ENCODE measurements at regions of chr4 and their contacts with region 1.

Region 1: DNA sequence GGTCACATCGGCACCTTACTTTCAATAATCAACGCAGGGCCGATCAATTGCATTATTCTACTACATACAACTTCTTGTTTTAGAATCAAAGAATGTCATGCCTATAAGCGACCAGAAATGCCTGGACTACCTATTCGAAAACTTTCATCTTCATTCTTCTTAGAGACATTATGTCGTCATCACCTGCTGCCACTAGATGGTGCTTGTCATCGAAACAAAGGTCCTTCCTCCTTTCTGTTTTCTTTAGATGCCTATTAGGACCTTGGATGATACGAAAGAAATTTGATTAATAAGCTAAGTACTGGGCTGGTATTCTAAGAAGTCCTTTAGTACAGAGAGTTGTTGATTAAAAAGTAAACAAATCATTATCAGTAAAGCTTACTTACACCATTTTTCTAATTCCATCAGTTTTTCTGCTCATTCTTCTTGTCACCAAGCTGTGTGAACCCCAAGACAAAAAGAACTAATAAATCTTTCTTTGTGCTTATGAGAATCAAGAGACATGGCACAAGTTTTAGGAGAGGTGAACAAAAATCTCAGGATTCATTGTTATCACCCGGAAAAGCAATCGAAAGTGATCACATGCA is 154.5 kb upstream of the SLC4A4 start:
- DNase-seq: peak in 1 of 2 donors; percentile 66
- H3K4me3 ChIP-seq: no peak overlapping the region
- H3K27ac ChIP-seq: no peak overlapping the region
- H3K4me1 ChIP-seq: peaks cover 0 to 8% of the 10 kb centered on the region in 2 donors
- H3K27me3 ChIP-seq: no peaks in the 10 kb centered on the region
- CTCF ChIP-seq: peak; percentile 25 to 67 (median 65)

Region 2: DNA sequence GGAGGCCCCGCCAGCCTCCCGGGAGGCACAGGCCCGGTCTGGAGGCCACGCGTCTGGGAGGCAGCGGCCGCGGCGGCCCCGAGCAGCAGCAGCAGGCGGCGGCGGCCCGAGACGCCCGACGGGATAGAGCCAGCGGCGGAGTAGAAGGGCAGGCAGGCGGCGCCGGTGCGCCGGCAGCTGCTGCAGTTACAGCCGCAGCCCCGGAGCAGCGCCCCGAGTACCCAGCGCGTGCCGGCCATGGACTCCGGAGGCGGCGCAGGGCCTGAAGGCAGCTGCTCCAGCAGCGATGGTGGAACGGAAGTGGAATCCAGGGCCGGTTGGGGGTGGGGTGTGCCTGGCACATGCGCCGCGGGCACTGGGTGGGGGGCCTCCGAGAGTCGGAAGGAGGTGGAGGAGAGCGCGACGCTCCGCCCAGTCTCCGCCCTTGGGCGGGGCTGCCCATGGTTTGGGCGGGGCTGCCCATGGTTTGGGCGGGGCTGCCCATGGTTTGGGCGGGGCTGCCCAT is 344.6 kb before region 1 on chr4 and contains the start of gene GRSF1:
- intact Hi-C with region 1: loop called (anchors 5 kb)
- DNase-seq: peak; percentile 71 to 95
- H3K4me3 ChIP-seq: peak within 1 kb of the TSS; percentile 76 to 88
- H3K27ac ChIP-seq: peak within 1 kb of the TSS; percentile 88 to 95
- H3K4me1 ChIP-seq: peaks cover 5 to 13% of the 10 kb centered on the region in 2 donors
- H3K27me3 ChIP-seq: no peaks in the 10 kb centered on the region
- CTCF ChIP-seq: no peak
- total RNA-seq, gene GRSF1: 23.3 TPM

Region 3: DNA sequence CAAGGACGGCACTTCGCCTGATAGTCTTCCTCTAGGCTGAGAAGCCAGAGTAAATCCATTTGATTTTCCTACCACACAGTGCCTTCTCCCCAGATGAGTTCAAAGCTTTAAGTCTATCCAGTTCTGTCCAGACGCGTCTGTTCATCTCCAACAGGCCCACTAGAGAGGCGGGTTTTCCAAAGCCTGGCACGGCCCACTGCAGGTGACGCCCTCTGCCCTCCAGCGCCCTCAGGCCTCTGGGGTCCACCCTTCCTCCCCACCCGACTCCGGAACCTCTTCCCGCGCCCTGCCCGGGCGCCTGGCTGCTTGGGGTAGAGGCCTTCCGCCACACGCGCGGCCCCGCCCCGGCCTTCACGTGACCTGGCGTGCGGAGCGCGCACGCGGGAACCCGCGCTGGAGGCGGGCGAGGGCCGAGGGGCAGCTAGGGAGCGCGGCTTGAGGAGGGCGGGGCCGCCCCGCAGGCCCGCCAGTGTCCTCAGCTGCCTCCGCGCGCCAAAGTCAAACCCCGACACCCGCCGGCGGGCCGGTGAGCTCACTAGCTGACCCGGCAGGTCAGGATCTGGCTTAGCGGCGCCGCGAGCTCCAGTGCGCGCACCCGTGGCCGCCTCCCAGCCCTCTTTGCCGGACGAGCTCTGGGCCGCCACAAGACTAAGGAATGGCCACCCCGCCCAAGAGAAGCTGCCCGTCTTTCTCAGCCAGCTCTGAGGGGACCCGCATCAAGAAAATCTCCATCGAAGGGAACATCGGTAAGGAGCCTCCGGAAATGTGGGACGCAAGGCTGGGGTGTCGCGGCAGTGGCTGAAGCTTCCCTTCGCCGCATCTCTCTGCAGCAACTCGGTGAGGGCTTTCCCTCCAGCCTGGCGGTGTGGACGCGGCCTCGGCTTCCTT is 190.9 kb before region 1 on chr4 and contains the start of gene DCK:
- intact Hi-C with region 1: loop called (anchors 10 kb)
- DNase-seq: peak; percentile 61 to 95
- H3K4me3 ChIP-seq: peak within 1 kb of the TSS; percentile 73 to 75
- H3K27ac ChIP-seq: peak within 1 kb of the TSS; percentile 76 to 86
- H3K4me1 ChIP-seq: peaks cover 6% of the 10 kb centered on the region in 2 donors
- H3K27me3 ChIP-seq: no peaks in the 10 kb centered on the region
- CTCF ChIP-seq: no peak
- total RNA-seq, gene DCK: 24.5 TPM

Region 4: GRCh38 chr4:71026086-71026485 is 158.2 kb before region 1 on chr4:
- intact Hi-C with region 1: no loop called
- DNase-seq: no peak
- H3K4me3 ChIP-seq: no peak overlapping the region
- H3K27ac ChIP-seq: no peak overlapping the region
- H3K4me1 ChIP-seq: no peaks in the 10 kb centered on the region
- H3K27me3 ChIP-seq: no peaks in the 10 kb centered on the region
- CTCF ChIP-seq: no peak

Region 5: GRCh38 chr4:71229477-71230270 is 45.4 kb after region 1 on chr4:
- intact Hi-C with region 1: loop called (anchors 1 kb)
- DNase-seq: no peak
- H3K4me3 ChIP-seq: no peak overlapping the region
- H3K27ac ChIP-seq: peak overlapping the region in 1 of 2 donors; percentile 35
- H3K4me1 ChIP-seq: peaks cover 0 to 13% of the 10 kb centered on the region in 2 donors
- H3K27me3 ChIP-seq: no peaks in the 10 kb centered on the region
- CTCF ChIP-seq: peak; percentile 40 to 79 (median 71)

Region 6: DNA sequence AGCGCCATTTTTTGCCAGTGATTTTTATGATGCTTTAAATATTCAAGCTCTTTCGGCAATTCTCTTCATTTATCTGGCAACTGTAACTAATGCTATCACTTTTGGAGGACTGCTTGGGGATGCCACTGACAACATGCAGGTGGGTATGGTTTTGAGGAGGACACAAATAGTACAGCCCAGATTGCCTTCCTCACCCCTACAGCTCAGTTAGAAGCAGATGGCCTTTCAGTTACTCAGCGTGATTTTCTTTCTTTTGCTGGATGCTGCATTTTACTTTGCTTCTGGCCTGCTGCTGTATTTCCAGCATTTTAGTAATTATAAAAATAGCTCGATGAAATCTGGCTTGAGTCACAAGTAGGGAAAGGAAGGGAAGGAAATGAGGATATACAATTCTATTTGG is 269.2 kb after region 1 on chr4:
- intact Hi-C with region 1: no loop called
- DNase-seq: no peak
- H3K4me3 ChIP-seq: no peak overlapping the region
- H3K27ac ChIP-seq: no peak overlapping the region
- H3K4me1 ChIP-seq: no peaks in the 10 kb centered on the region
- H3K27me3 ChIP-seq: no peaks in the 10 kb centered on the region
- CTCF ChIP-seq: no peak

Measured in ascending aorta (tissue), 2 donors.